ENCODE measurements at regions of chr12 and their contacts with region 1.

Region 1: DNA sequence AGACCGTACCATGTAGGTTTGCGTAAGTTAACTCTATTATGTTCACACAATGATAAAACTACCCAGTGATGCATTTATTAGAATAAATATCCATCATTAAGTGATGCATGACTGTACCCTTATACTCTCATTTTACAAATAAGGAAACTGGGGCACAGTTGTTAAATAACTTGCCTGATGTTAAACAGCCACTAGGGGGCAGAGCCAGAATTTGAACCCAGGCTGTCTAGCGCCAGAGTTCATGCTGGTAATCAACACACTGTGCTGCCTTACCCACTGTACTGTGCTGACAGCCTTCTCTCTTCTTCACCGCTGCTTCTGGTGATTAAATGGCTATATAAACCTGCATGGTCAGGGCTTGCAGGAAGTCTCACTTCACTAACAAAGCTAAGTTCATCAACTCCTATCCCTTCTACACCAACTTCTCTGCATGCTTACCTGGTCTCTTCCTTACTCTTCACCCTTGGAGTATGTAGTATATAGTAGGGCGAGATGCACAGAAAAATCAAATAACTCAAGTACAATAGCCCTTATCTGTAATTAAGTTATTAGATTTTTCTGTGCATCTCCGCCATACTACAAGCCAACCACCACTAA is 43.6 kb upstream of the APPL2 start:
- DNase-seq: peak in 2 of 3 donors; percentile 40 to 68
- ATAC-seq: peak; percentile 75
- H3K4me3 ChIP-seq: no peak overlapping the region
- H3K4me1 ChIP-seq: peaks cover 5% of the 10 kb centered on the region
- CTCF ChIP-seq: no peak

Region 2: DNA sequence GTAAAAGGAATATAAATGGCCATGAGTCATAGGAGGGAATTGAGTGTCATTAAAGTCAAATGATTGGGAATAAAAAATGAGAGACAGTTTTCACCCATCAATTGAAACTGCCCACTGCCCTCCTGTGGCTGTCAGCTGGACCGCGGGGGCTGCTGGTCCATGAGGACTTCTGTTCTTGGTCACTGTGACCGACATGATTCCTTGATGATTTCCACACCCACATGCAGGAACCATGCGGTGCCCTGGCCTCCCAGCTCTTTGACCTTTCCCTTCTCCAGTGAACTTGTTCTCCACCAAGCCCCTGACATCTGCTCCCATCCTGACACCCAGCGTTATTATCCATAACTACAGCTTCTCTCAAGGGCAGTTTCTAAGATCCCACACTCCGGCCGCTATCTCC is 99.4 kb after region 1 on chr12:
- intact Hi-C with region 1: loop called in 1 of 2 experiments (anchors 10 kb)
- DNase-seq: no peak
- ATAC-seq: no peak
- H3K4me3 ChIP-seq: no peak overlapping the region
- H3K4me1 ChIP-seq: peaks cover 3% of the 10 kb centered on the region
- CTCF ChIP-seq: no peak

Measured in mucosa of descending colon (tissue), 3 donors.